ENCODE measurements at regions of chr1 and their contacts with region 1.

Region 1: DNA sequence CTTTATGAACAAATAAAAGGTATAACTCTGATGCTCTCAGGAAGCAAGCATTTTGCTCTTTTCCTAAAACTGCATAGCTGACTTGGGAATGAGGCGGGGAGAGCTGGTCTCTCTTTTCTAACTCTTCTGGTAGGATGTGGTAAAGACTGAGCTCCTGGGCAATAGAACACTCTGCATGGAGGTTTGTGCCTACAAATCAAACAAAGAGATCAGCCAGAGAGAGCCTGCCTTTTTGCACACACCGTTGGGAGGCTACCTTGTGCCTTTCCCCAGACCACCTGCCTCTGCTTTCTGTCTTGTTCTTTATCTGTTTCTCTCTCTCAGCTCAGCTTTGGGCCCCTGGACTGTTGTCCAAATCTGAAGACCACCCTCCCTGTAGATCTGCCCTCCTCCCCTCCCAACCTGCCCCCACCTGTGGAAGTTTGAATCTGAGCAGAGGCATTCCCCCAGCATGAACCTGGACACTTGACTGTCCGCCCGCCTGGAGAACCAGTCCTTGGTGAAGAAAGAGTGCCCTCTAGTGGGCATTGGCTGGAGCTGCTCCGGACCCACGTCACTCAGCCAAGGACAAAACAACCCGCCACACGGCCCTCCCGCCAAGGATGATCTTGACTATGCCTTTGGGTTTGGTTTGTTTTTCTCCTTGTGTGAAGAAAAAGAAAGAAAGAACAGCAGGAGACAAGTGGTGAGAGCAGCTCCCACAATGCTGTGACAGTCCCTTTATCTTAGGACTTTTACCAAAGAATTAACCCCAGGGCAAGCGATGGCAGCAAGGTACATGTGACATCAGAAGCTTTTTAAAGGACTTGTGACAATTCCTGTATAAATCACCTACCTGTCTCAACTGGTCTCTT is 228.2 kb downstream of the PBX1 start:
- DNase-seq: peak; percentile 87
- H3K4me3 ChIP-seq: no peak overlapping the region
- H3K27ac ChIP-seq: no peak overlapping the region
- H3K4me1 ChIP-seq: peaks cover 26% of the 10 kb centered on the region
- H3K27me3 ChIP-seq: no peaks in the 10 kb centered on the region

Region 2: DNA sequence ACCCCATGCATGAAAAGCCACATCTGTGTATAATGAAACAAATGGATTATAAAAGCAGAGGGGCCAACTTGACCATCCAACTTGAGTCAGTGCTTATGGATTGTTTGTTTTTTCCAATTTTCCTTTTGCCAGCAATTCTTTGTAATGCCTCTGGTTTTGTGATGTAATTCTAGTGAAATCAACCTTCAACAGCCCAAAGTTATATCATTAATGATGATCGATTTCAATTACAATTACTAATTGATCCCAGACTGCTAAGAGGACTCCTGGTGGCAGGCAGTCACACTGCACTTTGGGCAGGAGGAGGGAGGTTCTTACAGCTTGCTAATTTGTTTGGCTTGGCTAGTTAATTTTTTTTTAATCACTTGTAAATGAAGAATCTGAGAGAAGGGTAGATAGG is 913.1 kb before region 1 on chr1:
- in situ Hi-C with region 1: loop called (anchors 25 kb)
- DNase-seq: peak; percentile 13
- H3K4me3 ChIP-seq: no peak overlapping the region
- H3K27ac ChIP-seq: no peak overlapping the region; the same call in 1 of the 2 replicates
- H3K4me1 ChIP-seq: peaks cover 53% of the 10 kb centered on the region
- H3K27me3 ChIP-seq: no peaks in the 10 kb centered on the region

Region 3: DNA sequence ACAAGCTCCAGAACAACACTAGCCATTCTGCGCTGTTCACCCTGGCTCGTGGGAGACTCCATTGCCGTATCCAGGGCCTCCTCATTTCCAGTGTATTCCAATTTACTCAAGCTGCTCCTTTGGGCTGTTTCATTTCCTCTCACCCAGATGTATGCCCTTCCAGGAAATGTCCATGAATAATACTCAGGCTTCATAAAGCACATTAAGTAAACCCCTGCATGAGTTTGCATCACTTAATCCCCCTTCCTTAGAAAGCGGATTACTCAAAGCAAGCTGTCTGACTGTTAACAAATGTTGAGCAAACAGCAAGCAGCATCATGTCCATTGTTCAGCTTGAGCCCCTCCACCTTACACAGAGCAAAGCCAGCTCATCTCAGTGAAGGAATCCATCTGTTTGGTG is 631.9 kb before region 1 on chr1:
- in situ Hi-C with region 1: loop called (anchors 25 kb)
- DNase-seq: no peak
- H3K4me3 ChIP-seq: no peak overlapping the region
- H3K27ac ChIP-seq: no peak overlapping the region
- H3K4me1 ChIP-seq: no peaks in the 10 kb centered on the region
- H3K27me3 ChIP-seq: no peaks in the 10 kb centered on the region

Region 4: GRCh38 chr1:164617377-164618201 is 169.6 kb before region 1 on chr1:
- in situ Hi-C with region 1: loop called (anchors 25 kb)
- DNase-seq: peak; percentile 59
- H3K4me3 ChIP-seq: no peak overlapping the region
- H3K27ac ChIP-seq: no peak overlapping the region
- H3K4me1 ChIP-seq: peaks cover 12% of the 10 kb centered on the region; the same call in 1 of the 2 replicates
- H3K27me3 ChIP-seq: no peaks in the 10 kb centered on the region